HCT116 (cell line): ENCODE measurements at regions of chr6 and their contacts with region 1.

Region 1: DNA sequence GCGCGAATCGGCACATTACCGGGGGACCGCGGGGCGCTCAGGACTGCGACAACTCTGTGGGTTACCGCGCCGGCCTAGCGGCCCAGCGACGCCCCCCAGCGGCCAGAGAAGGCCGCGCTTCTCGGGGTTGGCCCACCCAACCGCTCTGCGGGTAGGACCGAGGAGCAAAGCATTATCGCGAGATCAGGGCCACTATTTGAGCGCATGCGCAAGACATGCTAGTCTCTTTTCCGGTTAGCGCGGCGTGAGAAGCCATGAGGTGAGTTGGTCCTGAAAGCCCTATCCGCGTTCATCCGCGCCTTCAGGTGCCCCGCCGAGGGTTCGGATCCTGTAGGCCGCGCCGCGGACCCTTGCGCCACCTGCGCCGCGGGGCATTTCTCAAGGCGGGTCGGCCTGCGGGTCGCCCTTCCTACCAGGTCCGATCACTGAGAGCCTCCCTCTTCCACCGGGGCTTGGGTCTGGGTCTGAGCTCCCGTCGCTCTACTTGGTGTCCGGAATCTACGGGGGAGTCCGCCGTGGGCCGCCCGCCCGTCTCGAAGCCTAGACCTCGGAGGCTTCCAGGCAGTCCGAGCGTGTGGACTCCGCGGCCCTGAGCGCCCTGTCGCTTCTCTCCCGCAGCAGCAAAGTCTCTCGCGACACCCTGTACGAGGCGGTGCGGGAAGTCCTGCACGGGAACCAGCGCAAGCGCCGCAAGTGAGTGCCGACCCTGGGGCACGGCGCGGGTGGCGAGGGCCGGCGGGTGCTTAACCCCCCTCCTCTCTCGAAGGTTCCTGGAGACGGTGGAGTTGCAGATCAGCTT is at the start of gene RPL10A:
- DNase-seq: peak; percentile 94
- ATAC-seq: peak; percentile 82
- H3K4me3 ChIP-seq: peak within 1 kb of the TSS; percentile 98 to 99
- H3K27ac ChIP-seq: peak within 1 kb of the TSS; percentile 82
- H3K4me1 ChIP-seq: peaks cover 13 to 32% of the 10 kb centered on the region in 2 experiments; a peak in 3 of 4 replicates
- H3K27me3 ChIP-seq: no peaks in the 10 kb centered on the region
- CTCF ChIP-seq: peak in 2 of 3 experiments; percentile 96; a peak in 4 of 6 replicates
- POLR2A ChIP-seq: peak; percentile 99
- RAD21 ChIP-seq: no peak
- total RNA-seq, gene RPL10A: 1,981 TPM

Region 2: DNA sequence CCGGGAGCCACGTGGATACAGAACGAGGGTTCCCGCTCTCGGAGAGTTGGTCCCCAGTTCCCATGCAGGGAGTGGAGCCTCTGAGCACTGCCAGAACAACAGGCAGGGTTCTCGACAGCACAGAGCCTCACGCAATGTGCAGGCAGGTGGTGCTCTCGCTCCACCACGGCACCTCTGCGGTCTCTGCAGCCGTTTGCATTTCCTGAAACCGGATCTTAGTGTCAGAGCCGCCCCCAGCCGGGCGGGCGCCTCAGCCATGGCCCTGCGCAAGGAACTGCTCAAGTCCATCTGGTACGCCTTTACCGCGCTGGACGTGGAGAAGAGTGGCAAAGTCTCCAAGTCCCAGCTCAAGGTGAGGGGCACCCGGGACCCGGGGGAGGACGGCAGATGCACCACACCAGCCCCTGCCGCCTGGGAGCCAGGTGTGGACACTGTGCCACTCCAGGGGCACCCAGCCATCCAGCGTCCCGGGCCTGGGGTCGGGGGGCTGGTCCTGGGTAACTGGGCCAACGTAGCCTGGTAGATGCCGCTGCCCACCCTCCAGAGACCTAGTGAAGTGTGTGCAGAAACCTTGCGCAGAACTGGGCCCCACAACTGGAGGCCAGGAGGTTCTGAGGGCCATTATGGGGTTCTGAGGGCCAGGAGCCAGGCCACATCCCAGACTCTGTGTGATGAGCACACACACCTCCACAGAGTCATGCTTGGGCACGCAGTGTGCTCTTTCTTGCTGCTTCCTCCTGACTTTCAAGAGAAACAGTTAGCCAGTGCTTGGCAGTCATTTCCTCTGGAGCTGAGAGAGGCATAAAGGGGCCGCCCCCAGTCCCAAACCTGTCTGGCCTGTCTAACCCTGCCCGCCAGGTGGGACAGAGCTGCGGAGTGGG is 170.5 kb before region 1 on chr6 and contains the start of gene DEF6:
- CTCF ChIA-PET with region 1: interaction called, 4 read pairs
- POLR2A ChIA-PET with region 1: interaction called, 6 read pairs
- RAD21 ChIA-PET with region 1: no interaction called
- intact Hi-C with region 1: loop called (anchors 1 kb)
- DNase-seq: peak; percentile 81
- ATAC-seq: peak; percentile 93
- H3K4me3 ChIP-seq: peak within 1 kb of the TSS; percentile 84 to 94
- H3K27ac ChIP-seq: peak within 1 kb of the TSS; percentile 70
- H3K4me1 ChIP-seq: peaks cover 14 to 39% of the 10 kb centered on the region in 2 experiments
- H3K27me3 ChIP-seq: no peaks in the 10 kb centered on the region
- CTCF ChIP-seq: peak; percentile 89 to 96 (median 89)
- POLR2A ChIP-seq: peak; percentile 53
- RAD21 ChIP-seq: peak; percentile 100
- total RNA-seq, gene DEF6: 40.4 TPM

Region 3: GRCh38 chr6:35391240-35391968 is 77.0 kb before region 1 on chr6:
- CTCF ChIA-PET with region 1: no interaction called
- POLR2A ChIA-PET with region 1: no interaction called
- RAD21 ChIA-PET with region 1: no interaction called
- intact Hi-C with region 1: no loop called
- DNase-seq: peak; percentile 70
- ATAC-seq: peak; percentile 71
- H3K4me3 ChIP-seq: peak overlapping the region in 1 of 2 experiments; percentile 17; a peak in 2 of 4 replicates
- H3K27ac ChIP-seq: peak overlapping the region; percentile 42
- H3K4me1 ChIP-seq: peaks cover 41 to 87% of the 10 kb centered on the region in 2 experiments
- H3K27me3 ChIP-seq: no peaks in the 10 kb centered on the region
- CTCF ChIP-seq: peak in 1 of 3 experiments; percentile 33; a peak in 1 of 6 replicates
- POLR2A ChIP-seq: no peak
- RAD21 ChIP-seq: no peak

Region 4: DNA sequence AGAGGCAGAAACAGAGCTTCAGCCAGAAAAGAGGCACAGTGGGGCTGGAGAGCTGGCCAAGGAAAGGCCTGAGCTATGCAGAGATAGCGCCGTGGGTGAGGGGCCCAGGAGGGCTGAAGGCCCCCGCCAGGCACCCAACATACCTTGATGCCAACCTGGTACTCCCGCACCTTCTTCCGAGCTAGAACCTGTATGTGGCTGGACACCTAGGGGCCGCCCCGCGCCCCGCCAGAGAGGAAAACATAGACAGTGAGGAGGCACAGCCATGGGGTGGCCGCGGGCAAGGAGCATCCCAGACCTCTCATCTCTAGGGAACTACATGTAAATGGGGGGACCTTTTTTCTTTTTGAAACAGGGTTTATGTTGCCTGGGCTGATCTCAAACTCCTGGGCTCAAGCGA is 11.8 kb after region 1 on chr6:
- CTCF ChIA-PET with region 1: interaction called, 3 read pairs
- POLR2A ChIA-PET with region 1: interaction called, 48 read pairs
- RAD21 ChIA-PET with region 1: no interaction called
- intact Hi-C with region 1: no loop called
- DNase-seq: no peak
- ATAC-seq: no peak
- H3K4me3 ChIP-seq: no peak overlapping the region
- H3K27ac ChIP-seq: no peak overlapping the region
- H3K4me1 ChIP-seq: peaks cover 8 to 23% of the 10 kb centered on the region in 2 experiments
- H3K27me3 ChIP-seq: no peaks in the 10 kb centered on the region
- CTCF ChIP-seq: no peak
- POLR2A ChIP-seq: no peak
- RAD21 ChIP-seq: no peak

Region 5: DNA sequence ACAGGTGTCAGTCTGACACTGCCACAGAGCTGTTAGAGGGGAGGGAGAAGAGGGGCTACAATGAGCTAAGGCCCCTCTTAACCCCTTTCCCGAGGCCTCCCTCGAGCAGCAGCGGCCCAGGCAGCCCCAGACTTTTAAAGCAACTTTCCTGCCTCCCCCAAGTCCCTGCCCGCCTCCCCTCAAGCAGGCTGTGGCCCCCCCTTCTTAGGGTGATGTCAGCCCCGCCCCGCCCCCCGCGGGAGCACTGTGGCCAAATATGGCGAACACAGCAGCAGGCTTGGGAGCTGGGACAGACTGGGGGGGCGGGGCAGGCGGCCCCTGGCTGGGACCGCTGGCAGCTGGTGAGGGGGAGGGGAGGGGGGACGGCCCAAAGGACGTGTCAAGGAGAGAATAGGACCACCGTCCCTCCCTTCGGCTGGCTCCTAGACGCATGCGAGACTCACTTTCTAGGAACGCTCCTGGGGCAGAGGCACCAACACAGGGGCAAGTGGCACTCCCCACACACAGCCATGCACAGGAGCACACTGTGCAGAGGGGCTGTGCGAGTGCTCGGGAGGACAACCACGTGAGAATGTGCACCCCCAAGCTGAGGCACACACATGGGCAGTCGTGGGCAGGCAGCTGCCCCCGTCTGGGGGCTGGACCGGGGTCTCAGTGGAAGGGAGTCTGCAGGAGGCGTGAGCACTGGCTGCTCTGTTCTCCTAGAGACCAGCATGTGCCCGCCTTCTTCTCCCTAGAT is 21.8 kb after region 1 on chr6:
- CTCF ChIA-PET with region 1: no interaction called
- POLR2A ChIA-PET with region 1: interaction called, 48 read pairs
- RAD21 ChIA-PET with region 1: no interaction called
- intact Hi-C with region 1: no loop called
- DNase-seq: no peak
- ATAC-seq: no peak
- H3K4me3 ChIP-seq: no peak overlapping the region
- H3K27ac ChIP-seq: no peak overlapping the region
- H3K4me1 ChIP-seq: peaks cover 62 to 80% of the 10 kb centered on the region in 2 experiments
- H3K27me3 ChIP-seq: no peaks in the 10 kb centered on the region
- CTCF ChIP-seq: no peak
- POLR2A ChIP-seq: no peak
- RAD21 ChIP-seq: no peak

Region 6: GRCh38 chr6:35496841-35497570 is 28.6 kb after region 1 on chr6 and contains the start of gene TEAD3:
- CTCF ChIA-PET with region 1: no interaction called
- POLR2A ChIA-PET with region 1: interaction called, 14 read pairs
- RAD21 ChIA-PET with region 1: interaction called in 1 of 2 experiments, 3 read pairs
- intact Hi-C with region 1: no loop called
- DNase-seq: no peak
- ATAC-seq: peak; percentile 67
- H3K4me3 ChIP-seq: peak within 1 kb of the TSS; percentile 65 to 79
- H3K27ac ChIP-seq: peak within 1 kb of the TSS; percentile 98
- H3K4me1 ChIP-seq: peaks cover 26 to 48% of the 10 kb centered on the region in 2 experiments
- H3K27me3 ChIP-seq: no peaks in the 10 kb centered on the region
- CTCF ChIP-seq: peak in 1 of 3 experiments; percentile 16; a peak in 1 of 6 replicates
- POLR2A ChIP-seq: peak; percentile 72
- RAD21 ChIP-seq: no peak
- total RNA-seq, gene TEAD3: 21.8 TPM

Region 7: GRCh38 chr6:35624341-35625070 is 156.1 kb after region 1 on chr6:
- CTCF ChIA-PET with region 1: no interaction called
- POLR2A ChIA-PET with region 1: no interaction called
- RAD21 ChIA-PET with region 1: no interaction called
- intact Hi-C with region 1: no loop called
- DNase-seq: no peak
- ATAC-seq: peak; percentile 70; the same call in 1 of the 2 replicates
- H3K4me3 ChIP-seq: no peak overlapping the region
- H3K27ac ChIP-seq: no peak overlapping the region
- H3K4me1 ChIP-seq: peaks cover 4% of the 10 kb centered on the region in 2 experiments; a peak in 1 of 4 replicates
- H3K27me3 ChIP-seq: no peaks in the 10 kb centered on the region
- CTCF ChIP-seq: peak; percentile 42 to 46 (median 43); a peak in 5 of 6 replicates
- POLR2A ChIP-seq: no peak
- RAD21 ChIP-seq: peak; percentile 58